AG04450 (cell line): ENCODE measurements at regions of chr16 and their contacts with region 1.

Region 1: GRCh38 chr16:19067349-19068236 is at the start of gene COQ7:
- DNase-seq: peak; percentile 100
- H3K4me3 ChIP-seq: peak within 1 kb of the TSS; percentile 91
- H3K27ac ChIP-seq: peak within 1 kb of the TSS; percentile 95
- H3K27me3 ChIP-seq: no peaks in the 10 kb centered on the region
- CTCF ChIP-seq: no peak
- polyA plus RNA-seq, gene COQ7: 14.1 and 14.2 TPM in 2 replicates

Region 2: GRCh38 chr16:18983565-18984424 is 83.8 kb before region 1 on chr16 and contains the start of gene TMC7:
- CTCF ChIA-PET with region 1: interaction called, 27 read pairs
- POLR2A ChIA-PET with region 1: interaction called, 5 read pairs
- DNase-seq: peak; percentile 50
- H3K4me3 ChIP-seq: peak within 1 kb of the TSS; percentile 58
- H3K27ac ChIP-seq: no peak within 1 kb of the TSS
- H3K27me3 ChIP-seq: no peaks in the 10 kb centered on the region
- CTCF ChIP-seq: peak; percentile 78
- polyA plus RNA-seq, gene TMC7: 0.37 and 0.42 TPM in 2 replicates